Activated CD4-positive, alpha-beta memory T cell treated with anti-CD3 and anti-CD28 coated beads, Interleukin-2, amount 10 ng/mL, durations not matched to agents 7 days and 5 days (primary cell): ENCODE measurements at regions of chr5 and their contacts with region 1.

Region 1: GRCh38 chr5:157142317-157143126 is at the start of gene MED7:
- DNase-seq: peak; percentile 96
- H3K4me3 Mint-ChIP-seq: peak within 1 kb of the TSS; percentile 90
- H3K27ac Mint-ChIP-seq: peak within 1 kb of the TSS; percentile 98
- H3K4me1 Mint-ChIP-seq: peaks cover 43% of the 10 kb centered on the region
- H3K27me3 Mint-ChIP-seq: no peaks in the 10 kb centered on the region
- total RNA-seq, gene MED7: 16.8 to 17.7 TPM

Region 2: DNA sequence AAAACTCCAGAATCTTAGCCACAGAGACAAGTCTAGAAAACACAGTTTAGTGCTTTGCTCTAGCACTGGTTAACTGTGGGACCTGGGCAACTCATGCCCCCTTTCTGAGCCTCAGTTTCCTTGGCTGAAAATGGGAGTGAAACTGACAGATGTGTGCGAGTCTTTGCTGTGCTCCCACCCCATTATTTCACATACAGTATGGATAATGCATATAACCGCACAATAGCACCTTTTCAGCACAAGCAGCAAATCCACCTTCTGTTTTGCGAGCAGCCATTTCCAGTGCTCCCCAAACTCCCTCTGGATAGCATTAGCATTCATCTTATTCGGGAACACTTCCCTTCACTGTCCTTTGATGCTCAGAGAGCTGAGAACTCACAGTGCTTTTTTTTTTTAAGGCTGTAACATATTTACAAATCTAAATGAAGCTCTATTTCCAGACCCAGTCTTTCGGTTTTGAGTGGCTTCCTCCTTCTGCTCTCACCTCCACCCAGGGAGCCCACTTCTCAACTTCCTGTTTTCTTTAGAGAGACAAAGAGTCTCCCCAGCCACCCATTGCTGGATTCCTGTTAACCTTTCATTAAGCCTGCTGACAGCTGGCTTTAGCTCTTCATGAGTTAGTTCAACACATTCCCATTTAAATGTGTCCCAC is 228.7 kb before region 1 on chr5:
- CTCF ChIA-PET with region 1: no interaction called
- POLR2A ChIA-PET with region 1: interaction called, 20 read pairs
- DNase-seq: peak; percentile 41
- H3K4me3 Mint-ChIP-seq: peak overlapping the region; percentile 58
- H3K27ac Mint-ChIP-seq: peak overlapping the region; percentile 97
- H3K4me1 Mint-ChIP-seq: peaks cover 41% of the 10 kb centered on the region
- H3K27me3 Mint-ChIP-seq: no peaks in the 10 kb centered on the region

Region 3: DNA sequence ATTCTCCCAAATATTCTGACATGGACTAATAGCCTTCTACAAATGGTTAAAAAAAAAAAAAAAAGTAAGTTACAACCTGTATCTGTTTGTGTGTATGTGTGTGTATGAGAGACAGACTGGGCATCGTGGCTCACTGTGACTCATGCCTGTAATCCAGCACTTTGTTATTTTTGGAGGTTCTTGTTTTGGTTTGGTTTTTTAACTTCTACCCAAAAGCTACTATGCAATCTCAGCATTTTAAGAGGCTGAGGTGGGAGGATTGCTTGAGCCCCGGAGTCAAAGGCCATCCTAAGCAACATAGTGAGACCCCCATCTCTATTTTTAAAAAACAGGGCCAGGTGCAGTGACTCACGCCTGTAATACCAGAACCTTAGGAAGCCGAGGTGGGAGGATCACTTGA is 66.0 kb before region 1 on chr5:
- CTCF ChIA-PET with region 1: no interaction called
- POLR2A ChIA-PET with region 1: interaction called, 19 read pairs
- DNase-seq: peak; percentile 38
- H3K4me3 Mint-ChIP-seq: no peak overlapping the region
- H3K27ac Mint-ChIP-seq: peak overlapping the region; percentile 50
- H3K4me1 Mint-ChIP-seq: peaks cover 52% of the 10 kb centered on the region
- H3K27me3 Mint-ChIP-seq: no peaks in the 10 kb centered on the region

Region 4: GRCh38 chr5:157157293-157157891 is 14.9 kb after region 1 on chr5:
- CTCF ChIA-PET with region 1: interaction called, 6 read pairs
- POLR2A ChIA-PET with region 1: interaction called, 28 read pairs
- DNase-seq: no peak
- H3K4me3 Mint-ChIP-seq: peak overlapping the region; percentile 0
- H3K27ac Mint-ChIP-seq: peak overlapping the region; percentile 50
- H3K4me1 Mint-ChIP-seq: peaks cover 75% of the 10 kb centered on the region
- H3K27me3 Mint-ChIP-seq: no peaks in the 10 kb centered on the region

Region 5: DNA sequence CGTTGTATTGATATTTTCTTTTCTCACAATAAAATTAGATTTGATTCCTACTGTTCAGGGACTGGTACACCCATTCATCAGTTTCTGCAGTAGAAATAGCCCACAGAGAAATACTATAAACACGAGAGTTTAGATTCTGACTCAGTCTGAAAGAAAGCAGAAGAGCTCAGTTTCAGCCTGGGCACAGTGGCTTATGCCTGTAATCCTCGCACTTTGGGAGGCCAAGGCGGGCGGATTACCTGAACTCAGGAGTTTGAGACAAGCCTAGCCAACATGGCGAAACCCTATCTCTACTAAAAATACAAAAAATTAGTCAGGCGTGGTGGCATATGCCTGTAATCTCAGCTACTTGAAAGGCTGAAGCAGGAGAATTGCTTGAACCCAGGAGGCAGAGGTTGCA is 46.7 kb after region 1 on chr5:
- CTCF ChIA-PET with region 1: interaction called, 27 read pairs
- POLR2A ChIA-PET with region 1: interaction called, 18 read pairs
- DNase-seq: no peak
- H3K4me3 Mint-ChIP-seq: peak overlapping the region; percentile 70
- H3K27ac Mint-ChIP-seq: peak overlapping the region; percentile 85
- H3K4me1 Mint-ChIP-seq: peaks cover 83% of the 10 kb centered on the region
- H3K27me3 Mint-ChIP-seq: no peaks in the 10 kb centered on the region

Region 6: DNA sequence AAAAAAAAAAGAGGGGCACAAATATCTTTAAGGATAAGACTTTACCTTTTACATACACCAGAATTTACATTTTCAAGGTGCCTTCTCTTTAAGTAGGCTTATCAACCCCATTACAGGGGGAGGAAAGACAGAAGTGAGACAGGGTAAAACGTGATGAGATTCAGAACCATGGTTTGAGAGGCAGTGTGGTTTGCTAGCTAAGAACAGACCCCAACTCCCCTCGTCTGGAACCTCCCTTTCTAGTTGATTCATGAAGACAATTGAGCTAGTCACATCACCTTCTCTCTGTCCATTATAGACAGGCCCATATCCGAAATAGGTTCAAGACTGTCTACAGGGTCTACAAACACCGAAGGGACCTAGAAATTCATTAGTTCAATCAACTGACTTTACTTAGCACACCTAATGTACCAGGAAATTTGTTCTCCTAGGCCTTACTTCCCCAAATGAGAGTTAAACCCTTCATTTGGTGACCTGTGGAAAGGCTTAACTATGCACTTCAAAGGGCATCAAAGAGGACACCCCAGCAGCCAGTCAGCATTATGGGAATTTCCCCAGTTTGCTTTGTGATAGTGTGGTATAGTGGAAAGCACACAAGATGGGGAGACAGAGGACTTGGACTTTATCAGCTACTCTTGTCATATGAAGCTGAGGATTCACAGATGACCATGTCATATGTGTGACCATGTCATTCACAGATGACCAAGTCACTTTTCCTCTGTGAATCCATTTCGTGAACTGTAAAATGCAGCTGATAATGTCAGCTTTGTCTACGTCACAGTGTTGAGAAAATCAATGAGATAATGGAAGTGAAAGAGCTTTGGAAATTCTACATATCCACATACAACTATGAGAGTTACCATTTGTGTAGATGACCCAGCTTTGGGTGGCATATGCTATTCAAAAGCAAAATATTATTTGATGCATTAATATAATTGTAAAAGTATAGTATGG is 83.2 kb after region 1 on chr5:
- CTCF ChIA-PET with region 1: interaction called, 27 read pairs
- POLR2A ChIA-PET with region 1: interaction called, 14 read pairs
- DNase-seq: no peak
- H3K4me3 Mint-ChIP-seq: peak overlapping the region; percentile 26
- H3K27ac Mint-ChIP-seq: peak overlapping the region; percentile 69
- H3K4me1 Mint-ChIP-seq: peaks cover 72% of the 10 kb centered on the region
- H3K27me3 Mint-ChIP-seq: no peaks in the 10 kb centered on the region

Region 7: GRCh38 chr5:157303667-157304327 is 161.3 kb after region 1 on chr5:
- CTCF ChIA-PET with region 1: interaction called, 4 read pairs
- POLR2A ChIA-PET with region 1: interaction called, 18 read pairs
- DNase-seq: peak; percentile 65
- H3K4me3 Mint-ChIP-seq: peak overlapping the region; percentile 60
- H3K27ac Mint-ChIP-seq: peak overlapping the region; percentile 93
- H3K4me1 Mint-ChIP-seq: peaks cover 64% of the 10 kb centered on the region
- H3K27me3 Mint-ChIP-seq: no peaks in the 10 kb centered on the region

Region 8: GRCh38 chr5:157486221-157486681 is 343.7 kb after region 1 on chr5:
- CTCF ChIA-PET with region 1: no interaction called
- POLR2A ChIA-PET with region 1: no interaction called
- DNase-seq: no peak
- H3K4me3 Mint-ChIP-seq: no peak overlapping the region
- H3K27ac Mint-ChIP-seq: peak overlapping the region; percentile 63
- H3K4me1 Mint-ChIP-seq: peaks cover 62% of the 10 kb centered on the region
- H3K27me3 Mint-ChIP-seq: no peaks in the 10 kb centered on the region